Endothelial cell of umbilical vein (primary cell): ENCODE measurements at regions of chr13 and their contacts with region 1.

Region 1: GRCh38 chr13:44484562-44485138 is 91.5 kb downstream of the TSC22D1 start:
- DNase-seq: peak; percentile 9
- H3K4me3 ChIP-seq: no peak overlapping the region
- H3K27ac ChIP-seq: no peak overlapping the region
- H3K4me1 ChIP-seq: peaks cover 10% of the 10 kb centered on the region
- H3K27me3 ChIP-seq: no peaks in the 10 kb centered on the region
- CTCF ChIP-seq: no peak
- POLR2A ChIP-seq: no peak

Region 2: GRCh38 chr13:44435142-44435982 is 49.3 kb before region 1 on chr13:
- CTCF ChIA-PET with region 1: no interaction called
- POLR2A ChIA-PET with region 1: no interaction called
- dilution Hi-C with region 1: no loop called
- intact Hi-C with region 1: no loop called
- DNase-seq: peak; percentile 99
- H3K4me3 ChIP-seq: peak overlapping the region; percentile 86 to 99 (median 99)
- H3K27ac ChIP-seq: peak overlapping the region; percentile 95
- H3K4me1 ChIP-seq: peaks cover 16% of the 10 kb centered on the region
- H3K27me3 ChIP-seq: no peaks in the 10 kb centered on the region
- CTCF ChIP-seq: no peak
- POLR2A ChIP-seq: no peak

Region 3: GRCh38 chr13:44470638-44471562 is 13.8 kb before region 1 on chr13:
- CTCF ChIA-PET with region 1: interaction called, 11 read pairs
- POLR2A ChIA-PET with region 1: no interaction called
- dilution Hi-C with region 1: no loop called
- intact Hi-C with region 1: no loop called
- DNase-seq: peak; percentile 46
- H3K4me3 ChIP-seq: peak overlapping the region in 1 of 3 experiments; percentile 50
- H3K27ac ChIP-seq: peak overlapping the region; percentile 51
- H3K4me1 ChIP-seq: peaks cover 29% of the 10 kb centered on the region
- H3K27me3 ChIP-seq: no peaks in the 10 kb centered on the region
- CTCF ChIP-seq: peak; percentile 6 to 20
- POLR2A ChIP-seq: no peak

Region 4: GRCh38 chr13:44498969-44499368 is 14.3 kb after region 1 on chr13:
- CTCF ChIA-PET with region 1: interaction called, 12 read pairs
- POLR2A ChIA-PET with region 1: no interaction called
- dilution Hi-C with region 1: no loop called
- intact Hi-C with region 1: no loop called
- DNase-seq: no peak
- H3K4me3 ChIP-seq: no peak overlapping the region
- H3K27ac ChIP-seq: no peak overlapping the region
- H3K4me1 ChIP-seq: no peaks in the 10 kb centered on the region
- H3K27me3 ChIP-seq: no peaks in the 10 kb centered on the region
- CTCF ChIP-seq: no peak
- POLR2A ChIP-seq: no peak

Region 5: GRCh38 chr13:44879463-44880058 is 394.9 kb after region 1 on chr13:
- CTCF ChIA-PET with region 1: interaction called, 9 read pairs
- POLR2A ChIA-PET with region 1: no interaction called
- dilution Hi-C with region 1: no loop called
- intact Hi-C with region 1: loop called (anchors 1 kb)
- DNase-seq: peak; percentile 48
- H3K4me3 ChIP-seq: no peak overlapping the region
- H3K27ac ChIP-seq: no peak overlapping the region
- H3K4me1 ChIP-seq: peaks cover 12% of the 10 kb centered on the region
- H3K27me3 ChIP-seq: no peaks in the 10 kb centered on the region
- CTCF ChIP-seq: peak; percentile 47 to 52
- POLR2A ChIP-seq: no peak

Region 6: GRCh38 chr13:44917589-44918325 is 433.1 kb after region 1 on chr13:
- CTCF ChIA-PET with region 1: interaction called, 26 read pairs
- POLR2A ChIA-PET with region 1: no interaction called
- dilution Hi-C with region 1: no loop called
- intact Hi-C with region 1: loop called (anchors 1 kb)
- DNase-seq: peak; percentile 98
- H3K4me3 ChIP-seq: peak overlapping the region; percentile 4 to 66 (median 38)
- H3K27ac ChIP-seq: peak overlapping the region; percentile 95
- H3K4me1 ChIP-seq: peaks cover 29% of the 10 kb centered on the region
- H3K27me3 ChIP-seq: no peaks in the 10 kb centered on the region
- CTCF ChIP-seq: peak; percentile 38 to 42
- POLR2A ChIP-seq: no peak

Region 7: DNA sequence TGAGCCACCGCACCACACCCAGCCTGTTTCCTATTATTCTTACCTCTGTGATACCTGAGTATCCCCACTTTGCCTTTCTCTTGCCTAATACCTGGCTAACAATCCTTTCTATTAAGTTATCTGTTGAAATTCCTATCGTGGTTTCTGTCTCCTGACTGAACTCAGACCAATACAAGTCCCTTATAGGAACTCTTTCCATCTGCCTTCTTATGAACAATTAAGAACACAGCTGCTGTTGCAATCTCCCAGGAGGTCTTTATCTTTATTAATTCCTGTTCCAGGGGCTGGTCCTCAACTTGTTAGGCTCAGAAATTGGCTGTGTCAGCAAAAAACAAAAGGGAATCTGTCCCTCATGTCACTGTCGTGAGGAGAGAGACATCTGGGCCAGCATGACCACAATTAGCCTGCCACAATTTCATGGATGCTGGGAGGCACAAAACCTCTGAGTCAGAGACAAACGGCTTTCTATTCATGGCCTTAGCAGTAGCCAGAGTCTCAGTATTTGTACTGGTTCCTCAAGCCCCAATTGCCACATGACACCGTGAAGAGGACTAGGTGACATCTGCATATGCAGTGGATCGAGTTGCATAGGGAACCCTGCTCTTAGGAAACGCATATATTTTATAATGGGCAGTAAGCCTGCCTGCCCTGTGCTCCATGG is 446.4 kb after region 1 on chr13:
- CTCF ChIA-PET with region 1: interaction called, 20 read pairs
- POLR2A ChIA-PET with region 1: no interaction called
- dilution Hi-C with region 1: no loop called
- intact Hi-C with region 1: no loop called
- DNase-seq: no peak
- H3K4me3 ChIP-seq: no peak overlapping the region
- H3K27ac ChIP-seq: peak overlapping the region; percentile 94
- H3K4me1 ChIP-seq: peaks cover 63% of the 10 kb centered on the region
- H3K27me3 ChIP-seq: no peaks in the 10 kb centered on the region
- CTCF ChIP-seq: no peak
- POLR2A ChIP-seq: no peak

Region 8: GRCh38 chr13:45310341-45311125 is 825.9 kb after region 1 on chr13:
- CTCF ChIA-PET with region 1: interaction called, 3 read pairs
- POLR2A ChIA-PET with region 1: no interaction called
- dilution Hi-C with region 1: no loop called
- intact Hi-C with region 1: loop called (anchors 10 kb)
- DNase-seq: no peak
- H3K4me3 ChIP-seq: peak overlapping the region in 1 of 3 experiments; percentile 15
- H3K27ac ChIP-seq: no peak overlapping the region
- H3K4me1 ChIP-seq: peaks cover 10% of the 10 kb centered on the region
- H3K27me3 ChIP-seq: peaks cover 0 to 2% of the 10 kb centered on the region in 2 experiments
- CTCF ChIP-seq: no peak
- POLR2A ChIP-seq: no peak